SK-N-SH (cell line): ENCODE measurements at regions of chr14 and their contacts with region 1.

Region 1: GRCh38 chr14:92945959-92946846 is 23.3 kb downstream of the CHGA start:
- DNase-seq: peak; percentile 62
- H3K4me3 ChIP-seq: no peak overlapping the region
- H3K27ac ChIP-seq: peak overlapping the region in 1 of 2 experiments; percentile 78; a peak in 2 of 4 replicates
- H3K4me1 ChIP-seq: peaks cover 0 to 34% of the 10 kb centered on the region in 2 experiments; a peak in 1 of 4 replicates
- H3K27me3 ChIP-seq: no peaks in the 10 kb centered on the region
- CTCF ChIP-seq: no peak
- EP300 ChIP-seq: no peak
- RAD21 ChIP-seq: no peak

Region 2: GRCh38 chr14:92930737-92931602 is 15.2 kb before region 1 on chr14:
- CTCF ChIA-PET with region 1: interaction called, 16 read pairs
- POLR2A ChIA-PET with region 1: interaction called, 57 read pairs
- DNase-seq: no peak
- H3K4me3 ChIP-seq: no peak overlapping the region
- H3K27ac ChIP-seq: peak overlapping the region in 1 of 2 experiments; percentile 35; a peak in 1 of 4 replicates
- H3K4me1 ChIP-seq: peaks cover 0 to 85% of the 10 kb centered on the region in 2 experiments; a peak in 2 of 4 replicates
- H3K27me3 ChIP-seq: no peaks in the 10 kb centered on the region; the same call in 1 of the 2 replicates
- CTCF ChIP-seq: no peak
- EP300 ChIP-seq: no peak
- RAD21 ChIP-seq: no peak

Region 3: DNA sequence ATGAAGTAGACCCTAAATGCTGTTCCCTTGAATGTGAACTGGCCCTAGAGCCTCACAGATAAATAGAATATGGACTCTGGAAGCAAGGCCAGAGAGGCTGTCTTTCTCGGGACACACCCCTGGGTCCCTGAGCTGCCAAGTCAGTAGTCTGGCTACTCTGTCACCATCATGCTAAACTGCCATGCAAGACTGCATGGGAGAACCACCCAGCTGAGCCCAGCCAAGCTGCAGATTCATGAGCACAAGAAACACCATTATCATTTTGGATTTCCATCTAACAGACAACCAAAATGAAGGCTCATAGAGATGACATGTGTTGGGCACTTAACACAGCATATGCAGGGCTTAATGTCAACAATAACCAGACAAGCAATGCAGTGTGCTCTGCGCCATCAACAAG is 30.1 kb after region 1 on chr14:
- CTCF ChIA-PET with region 1: no interaction called
- POLR2A ChIA-PET with region 1: no interaction called
- DNase-seq: no peak
- H3K4me3 ChIP-seq: no peak overlapping the region
- H3K27ac ChIP-seq: no peak overlapping the region
- H3K4me1 ChIP-seq: peaks cover 0 to 30% of the 10 kb centered on the region in 2 experiments; a peak in 1 of 4 replicates
- H3K27me3 ChIP-seq: no peaks in the 10 kb centered on the region
- CTCF ChIP-seq: no peak
- EP300 ChIP-seq: no peak
- RAD21 ChIP-seq: no peak

Region 4: DNA sequence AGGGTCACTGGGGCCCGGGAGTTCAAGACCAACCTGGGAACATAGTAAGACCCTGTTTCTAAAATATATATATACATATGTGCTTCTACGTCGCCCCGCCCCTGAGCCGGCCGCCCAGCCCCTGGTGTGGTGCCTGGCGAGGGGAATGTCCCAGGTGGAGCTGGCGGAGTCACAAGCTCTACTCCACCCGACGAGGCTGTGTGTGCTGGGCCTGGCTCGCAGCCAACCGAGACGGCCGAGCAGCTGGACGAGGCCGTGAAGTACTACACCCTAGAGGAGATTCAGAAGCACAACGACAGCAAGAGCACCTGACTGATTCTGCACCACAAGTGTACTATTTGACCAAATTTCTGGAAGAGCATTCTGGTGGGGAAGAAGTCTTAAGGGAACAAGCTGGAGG is 191.7 kb after region 1 on chr14:
- CTCF ChIA-PET with region 1: interaction called, 55 read pairs
- POLR2A ChIA-PET with region 1: no interaction called
- DNase-seq: peak; percentile 46
- H3K4me3 ChIP-seq: no peak overlapping the region
- H3K27ac ChIP-seq: no peak overlapping the region
- H3K4me1 ChIP-seq: no peaks in the 10 kb centered on the region; a peak in 1 of 4 replicates
- H3K27me3 ChIP-seq: no peaks in the 10 kb centered on the region
- CTCF ChIP-seq: no peak
- EP300 ChIP-seq: no peak
- RAD21 ChIP-seq: no peak

Region 5: GRCh38 chr14:93156693-93157369 is 210.6 kb after region 1 on chr14:
- CTCF ChIA-PET with region 1: no interaction called
- POLR2A ChIA-PET with region 1: no interaction called
- DNase-seq: no peak
- H3K4me3 ChIP-seq: no peak overlapping the region
- H3K27ac ChIP-seq: no peak overlapping the region
- H3K4me1 ChIP-seq: peaks cover 0 to 10% of the 10 kb centered on the region in 2 experiments; a peak in 1 of 4 replicates
- H3K27me3 ChIP-seq: no peaks in the 10 kb centered on the region
- CTCF ChIP-seq: no peak
- EP300 ChIP-seq: no peak
- RAD21 ChIP-seq: no peak